ENCODE measurements at regions of chr1 and their contacts with region 1.

Region 1: GRCh38 chr1:21963477-21964217 is 13.2 kb upstream of the CELA3B start:
- DNase-seq: peak; percentile 48 to 66
- ATAC-seq: peak; percentile 97
- H3K4me3 ChIP-seq: no peak overlapping the region
- H3K27ac ChIP-seq: peak overlapping the region in 1 of 2 experiments; percentile 49; a peak in 2 of 6 replicates
- H3K4me1 ChIP-seq: peaks cover 10% of the 10 kb centered on the region; the same call in 1 of the 3 replicates
- CTCF ChIP-seq: peak; percentile 66
- EP300 ChIP-seq: no peak
- POLR2A ChIP-seq: no peak
- RAD21 ChIP-seq: peak; percentile 88 to 90

Region 2: DNA sequence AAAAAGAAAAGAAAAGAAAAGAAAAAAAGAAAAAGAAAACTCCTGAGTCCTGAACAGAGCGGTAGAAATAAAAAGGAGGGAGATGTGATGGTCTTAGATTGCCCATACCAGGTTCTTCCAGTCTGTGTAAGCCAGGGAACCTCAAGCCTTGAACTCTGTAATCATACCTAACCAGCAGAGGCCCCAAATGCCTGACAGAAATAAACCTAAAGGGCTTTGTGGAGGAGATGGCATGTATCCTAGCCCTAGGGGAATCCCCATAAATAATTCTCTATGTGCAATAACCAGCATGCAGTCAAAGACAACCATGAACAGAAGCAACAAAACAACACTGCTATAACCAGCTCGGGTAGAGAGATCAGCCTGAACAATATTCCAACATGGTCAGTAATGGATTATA is 221.1 kb before region 1 on chr1:
- CTCF ChIA-PET with region 1: no interaction called
- POLR2A ChIA-PET with region 1: no interaction called
- DNase-seq: no peak
- ATAC-seq: no peak
- H3K4me3 ChIP-seq: no peak overlapping the region
- H3K27ac ChIP-seq: no peak overlapping the region
- H3K4me1 ChIP-seq: no peaks in the 10 kb centered on the region
- CTCF ChIP-seq: no peak
- EP300 ChIP-seq: no peak
- POLR2A ChIP-seq: no peak
- RAD21 ChIP-seq: no peak

Region 3: DNA sequence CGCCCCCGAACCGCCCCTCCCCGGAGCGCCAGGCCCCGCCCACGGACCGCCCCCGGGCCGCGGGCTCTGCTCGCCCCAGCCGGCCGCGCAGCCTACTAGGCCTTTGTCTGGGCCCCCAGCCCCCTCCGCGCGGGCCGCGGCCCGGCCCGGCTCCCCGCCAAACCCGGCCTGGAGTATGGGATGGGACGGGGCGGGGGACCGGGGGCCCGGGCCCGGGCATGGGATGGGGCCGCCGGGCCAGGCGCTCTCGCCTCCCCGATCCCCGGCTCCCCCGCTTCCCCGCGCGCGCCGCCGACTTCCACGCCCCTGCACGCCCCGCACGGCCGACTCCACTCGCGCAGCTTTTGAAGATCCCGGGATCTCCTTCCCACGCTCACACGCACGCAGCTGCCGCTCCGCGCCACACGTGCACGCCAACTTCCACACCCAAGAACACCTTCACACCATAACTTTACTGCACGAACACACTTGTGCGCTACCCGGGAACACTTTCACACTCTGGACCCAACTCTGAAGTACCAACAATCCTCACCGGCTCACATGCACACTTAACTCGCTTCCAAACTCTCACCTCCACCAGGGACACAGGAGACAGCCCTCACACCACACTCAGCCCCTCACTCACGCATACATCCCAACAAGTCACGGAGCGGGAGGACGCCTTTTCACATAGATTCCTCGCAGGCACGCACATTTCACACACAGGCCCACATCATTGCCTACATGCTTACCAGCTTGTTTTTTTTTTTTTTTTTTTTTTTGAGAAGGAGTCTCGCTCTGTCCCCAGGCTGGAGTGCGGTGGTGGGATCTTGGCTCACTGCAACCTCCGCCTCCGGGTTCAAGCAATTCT is 26.1 kb before region 1 on chr1:
- CTCF ChIA-PET with region 1: interaction called, 21 read pairs
- POLR2A ChIA-PET with region 1: no interaction called
- DNase-seq: peak in 1 of 2 experiments; percentile 74
- ATAC-seq: peak; percentile 58 to 74
- H3K4me3 ChIP-seq: peak overlapping the region; percentile 76
- H3K27ac ChIP-seq: peak overlapping the region; percentile 96 to 100
- H3K4me1 ChIP-seq: peaks cover 64% of the 10 kb centered on the region
- CTCF ChIP-seq: no peak
- EP300 ChIP-seq: no peak
- POLR2A ChIP-seq: no peak
- RAD21 ChIP-seq: no peak

Region 4: DNA sequence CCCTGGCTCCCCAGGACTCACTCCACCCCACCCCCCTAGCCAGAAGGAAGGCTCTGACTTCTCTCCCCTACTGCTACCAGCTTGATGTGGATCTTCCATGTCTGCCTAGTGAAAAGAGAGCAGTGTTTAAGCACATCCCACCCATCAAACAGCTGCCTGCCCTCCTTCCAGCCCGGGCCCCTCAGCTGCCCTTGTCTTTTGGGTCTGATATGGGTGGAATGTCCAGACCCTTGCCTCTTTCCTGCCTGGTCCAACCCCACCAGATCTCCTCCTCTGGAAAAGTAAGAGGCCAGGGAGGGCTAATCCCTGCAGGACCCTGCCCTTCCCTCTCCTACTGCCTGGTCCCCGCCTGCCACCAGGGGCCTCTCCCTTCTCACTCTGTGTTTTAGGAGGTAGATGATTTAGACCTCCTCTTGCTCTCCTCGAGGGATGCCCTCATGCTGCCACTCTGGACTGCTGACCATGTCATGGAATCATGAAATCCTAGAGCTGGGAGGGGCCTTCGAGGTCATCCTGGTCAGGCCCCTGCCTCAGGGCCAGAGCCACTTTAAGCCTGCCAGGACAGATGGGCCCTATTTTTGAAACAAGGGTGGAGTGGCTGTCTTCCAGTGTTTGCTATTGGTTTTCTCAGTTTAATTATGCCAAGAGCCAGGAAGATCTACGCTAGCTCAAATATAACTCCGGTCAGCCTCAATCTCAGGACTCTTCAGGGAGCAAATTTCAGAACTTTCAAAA is 10.7 kb before region 1 on chr1:
- CTCF ChIA-PET with region 1: interaction called, 17 read pairs
- POLR2A ChIA-PET with region 1: no interaction called
- DNase-seq: no peak
- ATAC-seq: peak in 1 of 2 experiments; percentile 50; a peak in 1 of 6 replicates
- H3K4me3 ChIP-seq: no peak overlapping the region
- H3K27ac ChIP-seq: no peak overlapping the region
- H3K4me1 ChIP-seq: peaks cover 21% of the 10 kb centered on the region
- CTCF ChIP-seq: no peak
- EP300 ChIP-seq: no peak
- POLR2A ChIP-seq: no peak
- RAD21 ChIP-seq: no peak

Region 5: GRCh38 chr1:22171966-22172670 is 208.5 kb after region 1 on chr1:
- CTCF ChIA-PET with region 1: no interaction called
- POLR2A ChIA-PET with region 1: no interaction called
- DNase-seq: no peak
- ATAC-seq: no peak
- H3K4me3 ChIP-seq: no peak overlapping the region
- H3K27ac ChIP-seq: no peak overlapping the region
- H3K4me1 ChIP-seq: no peaks in the 10 kb centered on the region
- CTCF ChIP-seq: no peak
- EP300 ChIP-seq: no peak
- POLR2A ChIP-seq: no peak
- RAD21 ChIP-seq: no peak